AG04450 (cell line): ENCODE measurements at regions of chr7 and their contacts with region 1.

Region 1: GRCh38 chr7:95476904-95477594 is 8.7 kb upstream of the ASB4 start:
- DNase-seq: peak; percentile 30
- H3K4me3 ChIP-seq: no peak overlapping the region
- H3K27ac ChIP-seq: no peak overlapping the region
- H3K27me3 ChIP-seq: no peaks in the 10 kb centered on the region
- CTCF ChIP-seq: peak; percentile 84

Region 2: DNA sequence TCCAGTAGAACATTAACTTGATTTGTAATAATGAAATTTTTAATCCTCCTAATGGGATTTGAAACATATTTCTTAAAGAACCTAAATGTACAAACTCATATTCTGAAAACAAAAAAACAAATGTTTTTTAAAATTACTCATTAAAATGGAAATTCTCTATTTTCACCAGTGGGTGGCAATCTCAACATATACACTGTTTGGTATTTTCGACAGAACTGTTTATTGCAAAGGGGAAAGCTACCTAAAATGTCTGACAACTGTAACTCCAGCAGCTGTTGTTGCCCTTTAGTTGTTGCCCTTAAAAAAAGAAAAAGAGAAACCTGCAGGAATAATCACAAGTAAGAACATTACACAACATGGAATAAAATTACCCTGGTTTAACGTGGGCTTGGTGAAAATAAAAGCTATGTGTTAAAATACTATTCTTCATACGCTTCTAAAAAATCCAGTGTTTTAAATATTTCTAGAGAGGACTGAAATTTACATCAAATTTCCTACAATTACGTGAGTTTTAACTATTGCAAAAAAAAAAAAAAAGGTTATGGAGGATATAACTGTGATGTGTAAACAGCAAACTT is 1027.8 kb before region 1 on chr7:
- CTCF ChIA-PET with region 1: interaction called, 80 read pairs
- POLR2A ChIA-PET with region 1: no interaction called
- DNase-seq: no peak
- H3K4me3 ChIP-seq: no peak overlapping the region
- H3K27ac ChIP-seq: no peak overlapping the region
- H3K27me3 ChIP-seq: no peaks in the 10 kb centered on the region
- CTCF ChIP-seq: peak; percentile 65

Region 3: GRCh38 chr7:94580596-94580995 is 896.5 kb before region 1 on chr7:
- CTCF ChIA-PET with region 1: no interaction called
- POLR2A ChIA-PET with region 1: no interaction called
- DNase-seq: peak; percentile 10
- H3K4me3 ChIP-seq: no peak overlapping the region
- H3K27ac ChIP-seq: no peak overlapping the region
- H3K27me3 ChIP-seq: no peaks in the 10 kb centered on the region
- CTCF ChIP-seq: no peak

Region 4: GRCh38 chr7:95199779-95200558 is 277.1 kb before region 1 on chr7:
- CTCF ChIA-PET with region 1: interaction called, 12 read pairs
- POLR2A ChIA-PET with region 1: no interaction called
- DNase-seq: peak; percentile 1
- H3K4me3 ChIP-seq: no peak overlapping the region
- H3K27ac ChIP-seq: no peak overlapping the region
- H3K27me3 ChIP-seq: no peaks in the 10 kb centered on the region
- CTCF ChIP-seq: peak; percentile 61

Region 5: GRCh38 chr7:95357623-95358022 is 119.4 kb before region 1 on chr7:
- CTCF ChIA-PET with region 1: interaction called, 13 read pairs
- POLR2A ChIA-PET with region 1: no interaction called
- DNase-seq: no peak
- H3K4me3 ChIP-seq: no peak overlapping the region
- H3K27ac ChIP-seq: no peak overlapping the region
- H3K27me3 ChIP-seq: no peaks in the 10 kb centered on the region
- CTCF ChIP-seq: peak; percentile 22; the same call in 1 of the 2 replicates

Region 6: GRCh38 chr7:95491634-95492320 is 14.7 kb after region 1 on chr7:
- CTCF ChIA-PET with region 1: interaction called, 29 read pairs
- POLR2A ChIA-PET with region 1: no interaction called
- DNase-seq: no peak
- H3K4me3 ChIP-seq: no peak overlapping the region
- H3K27ac ChIP-seq: no peak overlapping the region
- H3K27me3 ChIP-seq: no peaks in the 10 kb centered on the region
- CTCF ChIP-seq: no peak

Region 7: DNA sequence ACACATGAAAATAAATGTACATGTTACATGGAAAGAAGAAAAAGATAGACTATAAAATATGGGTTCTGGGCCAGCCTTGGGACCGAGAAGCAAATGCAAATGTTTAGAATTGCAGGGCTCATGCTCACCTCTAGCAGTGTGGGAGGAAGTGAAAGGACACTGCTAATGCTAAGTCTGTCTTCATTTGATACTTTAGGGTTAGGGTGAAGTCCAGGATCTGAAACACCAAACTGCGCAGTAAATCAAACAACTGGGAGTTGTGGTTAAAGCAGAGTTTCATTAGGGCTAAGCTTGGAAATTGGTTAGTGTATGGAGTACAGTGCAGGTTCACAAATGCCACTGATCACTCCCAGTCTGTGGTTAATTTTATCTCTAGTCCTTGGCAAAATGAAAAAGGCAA is 192.5 kb after region 1 on chr7:
- CTCF ChIA-PET with region 1: no interaction called
- POLR2A ChIA-PET with region 1: no interaction called
- DNase-seq: no peak
- H3K4me3 ChIP-seq: no peak overlapping the region
- H3K27ac ChIP-seq: no peak overlapping the region
- H3K27me3 ChIP-seq: no peaks in the 10 kb centered on the region
- CTCF ChIP-seq: no peak

Region 8: GRCh38 chr7:95690367-95690947 is 213.4 kb after region 1 on chr7:
- CTCF ChIA-PET with region 1: interaction called, 12 read pairs
- POLR2A ChIA-PET with region 1: no interaction called
- DNase-seq: peak; percentile 10
- H3K4me3 ChIP-seq: no peak overlapping the region
- H3K27ac ChIP-seq: no peak overlapping the region
- H3K27me3 ChIP-seq: no peaks in the 10 kb centered on the region
- CTCF ChIP-seq: peak; percentile 58

Region 9: GRCh38 chr7:96973986-96974385 is 1496.9 kb after region 1 on chr7:
- CTCF ChIA-PET with region 1: no interaction called
- POLR2A ChIA-PET with region 1: no interaction called
- DNase-seq: no peak
- H3K4me3 ChIP-seq: no peak overlapping the region
- H3K27ac ChIP-seq: no peak overlapping the region
- H3K27me3 ChIP-seq: no peaks in the 10 kb centered on the region
- CTCF ChIP-seq: no peak